Heart left ventricle (tissue), 16 donors: ENCODE measurements at regions of chr12 and their contacts with region 1.

Region 1: GRCh38 chr12:31117203-31118011 is 43.7 kb downstream of the DDX11 start:
- DNase-seq: peak in 1 of 5 donors; percentile 59
- ATAC-seq: peak in 3 of 4 donors; percentile 41 to 86 (median 44)
- H3K4me3 ChIP-seq: peak overlapping the region in 10 of 12 donors; percentile 14 to 50 (median 32)
- H3K27ac ChIP-seq: no peak overlapping the region
- H3K4me1 ChIP-seq: peaks cover 0 to 27% (median 12%) of the 10 kb centered on the region in 12 donors
- H3K27me3 ChIP-seq: peaks cover 2 to 50% (median 22%) of the 10 kb centered on the region in 9 donors
- CTCF ChIP-seq: peak in 11 of 12 donors; percentile 2 to 77 (median 43)
- POLR2A ChIP-seq: no peak

Region 2: GRCh38 chr12:30795410-30796312 is 321.7 kb before region 1 on chr12:
- intact Hi-C with region 1: no loop called
- DNase-seq: peak; percentile 60 to 84 (median 69)
- ATAC-seq: peak; percentile 37 to 85 (median 80)
- H3K4me3 ChIP-seq: peak overlapping the region; percentile 48 to 80 (median 63)
- H3K27ac ChIP-seq: peak overlapping the region in 11 of 12 donors; percentile 11 to 89 (median 49)
- H3K4me1 ChIP-seq: peaks cover 0 to 27% (median 11%) of the 10 kb centered on the region in 12 donors
- H3K27me3 ChIP-seq: peaks cover 0 to 23% (median 0%) of the 10 kb centered on the region in 9 donors
- CTCF ChIP-seq: peak in 3 of 12 donors; percentile 8 to 19 (median 17)
- POLR2A ChIP-seq: no peak

Region 3: GRCh38 chr12:31238764-31239387 is 121.5 kb after region 1 on chr12:
- intact Hi-C with region 1: loop called in 2 of 10 experiments (anchors 5 to 10 kb)
- DNase-seq: peak in 4 of 5 donors; percentile 44 to 65 (median 56)
- ATAC-seq: peak in 3 of 4 donors; percentile 69 to 83 (median 72)
- H3K4me3 ChIP-seq: no peak overlapping the region
- H3K27ac ChIP-seq: no peak overlapping the region
- H3K4me1 ChIP-seq: peaks cover 0 to 4% (median 0%) of the 10 kb centered on the region in 12 donors
- H3K27me3 ChIP-seq: peaks cover 0 to 34% (median 11%) of the 10 kb centered on the region in 9 donors
- CTCF ChIP-seq: peak; percentile 51 to 79 (median 62)
- POLR2A ChIP-seq: no peak

Region 4: DNA sequence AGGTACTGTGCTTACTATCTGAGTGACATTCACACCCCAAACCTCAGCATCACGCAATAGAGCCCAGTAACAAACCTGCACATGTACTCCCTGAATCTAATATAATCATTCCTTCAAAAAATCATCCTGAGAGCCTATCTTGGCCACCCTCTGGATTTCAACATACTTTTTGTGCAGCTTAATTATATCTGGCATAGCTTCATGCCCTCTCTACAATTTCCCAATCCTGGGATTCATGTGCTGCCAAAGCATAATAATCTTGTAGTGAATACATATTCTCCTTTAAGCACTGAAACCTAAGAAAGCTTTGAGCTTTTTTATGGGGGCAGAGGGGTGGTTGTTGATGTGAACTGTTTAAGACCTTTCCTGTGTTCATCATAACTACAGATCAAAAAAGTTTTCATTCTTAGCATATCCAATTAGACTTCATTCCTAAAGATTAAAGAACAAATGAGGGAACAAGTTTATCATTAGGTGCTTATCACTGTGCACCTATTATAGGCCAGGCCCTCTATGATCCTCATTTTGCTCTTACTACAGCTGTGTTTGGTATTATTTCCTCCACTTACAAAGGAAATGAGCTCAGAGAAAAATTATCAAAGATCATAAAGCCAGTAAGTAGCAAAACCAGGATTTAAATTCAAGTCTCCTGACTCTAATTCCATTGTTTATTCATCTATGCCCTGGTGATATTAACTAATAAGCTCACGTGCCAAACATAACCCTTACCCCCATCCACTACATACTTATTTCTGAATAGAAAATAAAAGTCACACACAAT is 157.3 kb after region 1 on chr12:
- intact Hi-C with region 1: loop called in 1 of 10 experiments (anchors 10 kb)
- DNase-seq: no peak
- ATAC-seq: no peak
- H3K4me3 ChIP-seq: no peak overlapping the region
- H3K27ac ChIP-seq: no peak overlapping the region
- H3K4me1 ChIP-seq: no peaks in the 10 kb centered on the region
- H3K27me3 ChIP-seq: no peaks in the 10 kb centered on the region
- CTCF ChIP-seq: no peak
- POLR2A ChIP-seq: no peak